ENCODE measurements at regions of chr1 and their contacts with region 1.

Region 1: GRCh38 chr1:153510984-153511410 is 24.8 kb downstream of the S100A6 start:
- DNase-seq: peak; percentile 88
- ATAC-seq: peak; percentile 73

Region 2: GRCh38 chr1:153058154-153058553 is 452.8 kb before region 1 on chr1:
- intact Hi-C with region 1: no loop called
- DNase-seq: no peak
- ATAC-seq: no peak

Region 3: GRCh38 chr1:153253693-153254092 is 257.3 kb before region 1 on chr1:
- intact Hi-C with region 1: no loop called
- DNase-seq: no peak
- ATAC-seq: no peak

Region 4: DNA sequence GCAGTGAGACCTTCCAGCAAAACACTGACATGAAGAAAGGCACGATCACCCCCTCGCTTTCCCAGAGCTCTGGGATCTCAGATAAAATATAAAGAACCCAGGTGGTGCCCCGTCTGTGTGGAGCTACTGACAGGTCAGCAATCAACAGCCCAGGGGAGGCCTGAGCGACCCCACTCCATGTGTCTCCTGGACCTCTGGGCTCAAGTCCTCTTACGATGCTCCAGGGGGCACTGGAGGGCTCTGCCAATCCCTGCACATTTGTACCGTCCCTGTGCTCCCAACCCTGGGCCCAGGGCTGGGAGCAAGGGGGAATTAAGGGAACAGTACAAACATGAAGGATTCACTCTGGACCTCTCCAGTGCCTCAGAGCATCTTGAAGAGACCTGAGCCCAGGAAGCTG is 82.2 kb before region 1 on chr1:
- intact Hi-C with region 1: no loop called
- DNase-seq: no peak
- ATAC-seq: no peak

Region 5: GRCh38 chr1:153494976-153495535 is 15.9 kb before region 1 on chr1:
- intact Hi-C with region 1: no loop called
- DNase-seq: peak; percentile 88
- ATAC-seq: peak; percentile 72

Region 6: GRCh38 chr1:153566440-153567379 is 55.7 kb after region 1 on chr1:
- intact Hi-C with region 1: loop called (anchors 2 kb)
- DNase-seq: peak; percentile 94
- ATAC-seq: peak; percentile 90

Measured in Right ventricle myocardium superior (tissue), 1 donor.